AG04449 (cell line): ENCODE measurements at regions of chr2 and their contacts with region 1.

Region 1: GRCh38 chr2:70919672-70920366 is 15.9 kb upstream of the ATP6V1B1 start:
- DNase-seq: no peak
- H3K4me3 ChIP-seq: no peak overlapping the region
- CTCF ChIP-seq: peak; percentile 94

Region 2: DNA sequence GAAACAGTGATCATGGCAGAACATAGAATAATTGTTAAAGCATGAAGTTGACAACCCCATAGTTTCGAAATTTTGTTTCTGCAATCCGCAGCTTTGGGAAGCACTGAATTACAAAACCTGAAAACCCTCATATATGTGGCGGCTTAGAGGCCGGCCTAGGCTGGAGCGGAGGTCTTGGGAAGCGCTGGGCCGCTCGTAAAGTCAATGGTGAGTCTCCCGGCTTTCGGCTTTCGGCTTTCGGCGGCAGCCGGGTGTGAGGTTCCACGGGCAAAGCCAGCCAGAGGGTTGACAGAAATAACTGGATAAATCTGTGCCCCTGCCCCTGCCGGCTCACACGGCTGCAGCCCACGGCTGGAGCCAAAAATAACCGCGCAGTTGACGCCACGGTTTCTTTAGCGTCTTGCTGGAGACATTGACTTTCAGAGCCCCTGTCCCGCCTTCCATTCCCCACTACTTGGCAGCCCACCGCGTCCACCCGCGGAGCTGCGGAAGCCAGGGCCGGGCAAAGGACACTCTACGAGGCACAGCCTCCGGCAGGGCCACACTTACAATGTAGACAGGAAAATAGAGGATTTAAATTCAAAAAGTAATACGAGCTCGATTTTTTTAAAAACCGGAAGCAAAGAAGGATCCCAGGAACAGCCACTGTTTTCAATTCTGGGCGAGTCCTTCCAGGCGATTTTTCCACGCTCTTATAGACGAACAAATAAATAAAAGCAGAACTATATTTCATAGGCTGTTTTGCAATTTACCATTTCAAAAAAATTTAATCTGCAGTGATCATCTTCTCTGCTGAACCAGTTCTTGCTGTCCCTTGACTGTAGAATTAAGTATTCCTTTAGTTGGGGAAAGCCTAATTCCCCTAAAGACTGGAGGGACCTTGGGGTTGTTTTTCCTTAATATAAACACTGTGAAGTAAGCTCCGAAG is 12.4 kb before region 1 on chr2:
- CTCF ChIA-PET with region 1: interaction called, 50 read pairs
- POLR2A ChIA-PET with region 1: no interaction called
- DNase-seq: no peak
- H3K4me3 ChIP-seq: no peak overlapping the region; the same call in 1 of the 2 replicates
- CTCF ChIP-seq: no peak

Region 3: GRCh38 chr2:70935468-70936164 is 15.8 kb after region 1 on chr2 and contains the start of gene ATP6V1B1:
- CTCF ChIA-PET with region 1: interaction called, 12 read pairs
- POLR2A ChIA-PET with region 1: no interaction called
- DNase-seq: no peak
- H3K4me3 ChIP-seq: no peak within 1 kb of the TSS
- CTCF ChIP-seq: no peak

Region 4: GRCh38 chr2:70942396-70943204 is 22.8 kb after region 1 on chr2:
- CTCF ChIA-PET with region 1: interaction called, 64 read pairs
- POLR2A ChIA-PET with region 1: no interaction called
- DNase-seq: no peak
- H3K4me3 ChIP-seq: no peak overlapping the region
- CTCF ChIP-seq: no peak